ENCODE measurements at regions of chr19 and their contacts with region 1.

Region 1: GRCh38 chr19:14073261-14073924 is 807 bp downstream of the MISP3 start:
- DNase-seq: peak in 1 of 2 experiments; percentile 78
- ATAC-seq: peak; percentile 60 to 72
- H3K4me3 ChIP-seq: peak overlapping the region; percentile 83
- H3K27ac ChIP-seq: peak overlapping the region; percentile 94 to 99
- H3K4me1 ChIP-seq: peaks cover 4% of the 10 kb centered on the region; the same call in 1 of the 3 replicates
- CTCF ChIP-seq: peak; percentile 87
- EP300 ChIP-seq: no peak
- POLR2A ChIP-seq: no peak
- RAD21 ChIP-seq: no peak

Region 2: DNA sequence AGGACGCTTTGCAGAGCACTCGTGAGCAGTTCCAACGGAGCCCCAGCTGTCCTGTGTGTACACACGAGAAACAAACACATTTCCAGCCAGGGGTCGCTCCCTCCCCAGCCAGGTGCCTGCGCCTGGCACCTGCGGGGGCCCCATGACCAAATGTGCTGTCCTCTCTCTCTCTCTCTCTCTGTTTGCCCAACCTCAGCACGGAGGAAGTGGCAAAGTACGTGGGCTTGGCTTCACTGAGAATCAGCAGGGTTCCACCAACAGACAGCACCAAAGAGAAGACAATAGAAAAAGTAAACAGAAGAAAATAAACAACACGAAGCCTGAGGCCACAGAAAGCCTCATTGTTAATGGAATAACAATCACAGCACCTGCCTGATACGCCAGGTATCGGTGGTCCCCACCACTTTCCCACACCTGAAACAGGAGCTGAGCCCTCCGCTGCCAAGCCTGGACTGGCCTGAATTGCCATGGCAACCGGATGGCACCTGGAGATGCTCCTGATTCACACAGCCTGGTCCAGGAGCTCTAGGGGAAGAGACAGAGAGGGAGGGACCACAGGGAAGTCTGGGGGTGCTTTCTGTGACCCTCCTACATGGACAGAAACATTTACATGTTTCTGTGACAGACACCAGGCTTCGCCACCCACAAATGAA is 463.2 kb before region 1 on chr19:
- CTCF ChIA-PET with region 1: no interaction called
- POLR2A ChIA-PET with region 1: no interaction called
- DNase-seq: peak in 1 of 2 experiments; percentile 17
- ATAC-seq: peak; percentile 33 to 39; a peak in 3 of 6 replicates
- H3K4me3 ChIP-seq: no peak overlapping the region
- H3K27ac ChIP-seq: no peak overlapping the region
- H3K4me1 ChIP-seq: peaks cover 7% of the 10 kb centered on the region; the same call in 2 of the 3 replicates
- CTCF ChIP-seq: no peak
- EP300 ChIP-seq: no peak
- POLR2A ChIP-seq: no peak
- RAD21 ChIP-seq: peak in 1 of 2 experiments; percentile 37; a peak in 2 of 5 replicates

Region 3: GRCh38 chr19:13872695-13873389 is 200.6 kb before region 1 on chr19:
- CTCF ChIA-PET with region 1: interaction called, 10 read pairs
- POLR2A ChIA-PET with region 1: no interaction called
- DNase-seq: peak; percentile 47 to 71
- ATAC-seq: peak; percentile 87 to 90
- H3K4me3 ChIP-seq: peak overlapping the region; percentile 69
- H3K27ac ChIP-seq: peak overlapping the region; percentile 87 to 99
- H3K4me1 ChIP-seq: peaks cover 16% of the 10 kb centered on the region; the same call in 2 of the 3 replicates
- CTCF ChIP-seq: peak; percentile 37; the same call in 2 of the 3 replicates
- EP300 ChIP-seq: no peak
- POLR2A ChIP-seq: no peak
- RAD21 ChIP-seq: peak; percentile 24 to 42; a peak in 4 of 5 replicates

Region 4: GRCh38 chr19:13880059-13881043 is 193.0 kb before region 1 on chr19:
- CTCF ChIA-PET with region 1: interaction called, 30 read pairs
- POLR2A ChIA-PET with region 1: interaction called, 5 read pairs
- DNase-seq: peak; percentile 78 to 94
- ATAC-seq: peak; percentile 88 to 92
- H3K4me3 ChIP-seq: peak overlapping the region; percentile 33; the same call in 2 of the 3 replicates
- H3K27ac ChIP-seq: peak overlapping the region; percentile 96 to 100
- H3K4me1 ChIP-seq: peaks cover 13% of the 10 kb centered on the region
- CTCF ChIP-seq: peak; percentile 98
- EP300 ChIP-seq: no peak
- POLR2A ChIP-seq: no peak; the same call in 1 of the 2 replicates
- RAD21 ChIP-seq: peak; percentile 92 to 98

Region 5: GRCh38 chr19:14031719-14032480 is 41.5 kb before region 1 on chr19 and contains the start of gene IL27RA:
- CTCF ChIA-PET with region 1: interaction called, 22 read pairs
- POLR2A ChIA-PET with region 1: interaction called, 4 read pairs
- DNase-seq: peak; percentile 59 to 68
- ATAC-seq: peak; percentile 89 to 90
- H3K4me3 ChIP-seq: peak within 1 kb of the TSS; percentile 69
- H3K27ac ChIP-seq: peak within 1 kb of the TSS; percentile 88
- H3K4me1 ChIP-seq: peaks cover 4% of the 10 kb centered on the region; the same call in 1 of the 3 replicates
- CTCF ChIP-seq: peak; percentile 46; the same call in 2 of the 3 replicates
- EP300 ChIP-seq: no peak
- POLR2A ChIP-seq: peak; percentile 16; the same call in 1 of the 2 replicates
- RAD21 ChIP-seq: peak; percentile 39 to 43; a peak in 4 of 5 replicates
- polyA plus RNA-seq, gene IL27RA: 3.0 and 3.1 TPM in 2 replicates

Region 6: GRCh38 chr19:14039181-14039580 is 34.2 kb before region 1 on chr19:
- CTCF ChIA-PET with region 1: interaction called, 22 read pairs
- POLR2A ChIA-PET with region 1: no interaction called
- DNase-seq: no peak
- ATAC-seq: no peak
- H3K4me3 ChIP-seq: no peak overlapping the region
- H3K27ac ChIP-seq: no peak overlapping the region
- H3K4me1 ChIP-seq: no peaks in the 10 kb centered on the region
- CTCF ChIP-seq: no peak
- EP300 ChIP-seq: no peak
- POLR2A ChIP-seq: no peak
- RAD21 ChIP-seq: no peak